Mammary epithelial cell (primary cell): ENCODE measurements at regions of chr20 and their contacts with region 1.

Region 1: GRCh38 chr20:37901654-37902503 is 1.0 kb upstream of the VSTM2L start:
- DNase-seq: peak; percentile 62
- H3K4me3 ChIP-seq: peak overlapping the region in 2 of 3 experiments; percentile 35 to 65
- H3K27ac ChIP-seq: no peak overlapping the region
- H3K4me1 ChIP-seq: peaks cover 7% of the 10 kb centered on the region
- H3K27me3 ChIP-seq: no peaks in the 10 kb centered on the region
- CTCF ChIP-seq: peak; percentile 27 to 57

Region 2: GRCh38 chr20:37564388-37565133 is 337.3 kb before region 1 on chr20:
- CTCF ChIA-PET with region 1: no interaction called
- dilution Hi-C with region 1: no loop called
- in situ Hi-C with region 1: no loop called
- intact Hi-C with region 1: loop called (anchors 2 kb)
- DNase-seq: peak; percentile 7
- H3K4me3 ChIP-seq: no peak overlapping the region
- H3K27ac ChIP-seq: no peak overlapping the region
- H3K4me1 ChIP-seq: no peaks in the 10 kb centered on the region
- H3K27me3 ChIP-seq: peaks cover 3% of the 10 kb centered on the region
- CTCF ChIP-seq: peak; percentile 57 to 96

Region 3: DNA sequence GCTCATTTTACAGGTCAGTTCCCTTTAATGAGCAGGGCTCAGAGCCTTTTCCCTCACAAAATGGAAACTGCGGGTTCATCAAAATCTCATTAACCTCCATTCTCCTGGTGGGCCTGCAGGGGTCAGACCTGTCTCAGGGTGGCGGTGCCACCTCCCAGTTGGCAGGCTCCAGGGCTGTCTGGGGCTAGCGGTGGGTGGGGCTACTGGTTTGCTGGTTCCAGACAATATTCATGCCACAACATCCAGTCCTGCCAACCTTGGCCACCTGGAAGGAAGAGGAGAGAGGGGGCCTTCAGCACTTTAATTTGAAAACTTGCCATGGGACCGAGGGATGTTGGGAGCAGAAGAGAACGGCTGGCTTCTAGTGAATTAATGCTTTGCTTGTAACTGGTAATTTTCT is 249.9 kb before region 1 on chr20:
- CTCF ChIA-PET with region 1: no interaction called
- dilution Hi-C with region 1: no loop called
- in situ Hi-C with region 1: no loop called
- intact Hi-C with region 1: loop called (anchors 10 kb)
- DNase-seq: peak; percentile 17
- H3K4me3 ChIP-seq: no peak overlapping the region
- H3K27ac ChIP-seq: no peak overlapping the region
- H3K4me1 ChIP-seq: no peaks in the 10 kb centered on the region
- H3K27me3 ChIP-seq: no peaks in the 10 kb centered on the region
- CTCF ChIP-seq: peak; percentile 37 to 56